OCI-LY7 (cell line): ENCODE measurements at regions of chr5 and their contacts with region 1.

Region 1: DNA sequence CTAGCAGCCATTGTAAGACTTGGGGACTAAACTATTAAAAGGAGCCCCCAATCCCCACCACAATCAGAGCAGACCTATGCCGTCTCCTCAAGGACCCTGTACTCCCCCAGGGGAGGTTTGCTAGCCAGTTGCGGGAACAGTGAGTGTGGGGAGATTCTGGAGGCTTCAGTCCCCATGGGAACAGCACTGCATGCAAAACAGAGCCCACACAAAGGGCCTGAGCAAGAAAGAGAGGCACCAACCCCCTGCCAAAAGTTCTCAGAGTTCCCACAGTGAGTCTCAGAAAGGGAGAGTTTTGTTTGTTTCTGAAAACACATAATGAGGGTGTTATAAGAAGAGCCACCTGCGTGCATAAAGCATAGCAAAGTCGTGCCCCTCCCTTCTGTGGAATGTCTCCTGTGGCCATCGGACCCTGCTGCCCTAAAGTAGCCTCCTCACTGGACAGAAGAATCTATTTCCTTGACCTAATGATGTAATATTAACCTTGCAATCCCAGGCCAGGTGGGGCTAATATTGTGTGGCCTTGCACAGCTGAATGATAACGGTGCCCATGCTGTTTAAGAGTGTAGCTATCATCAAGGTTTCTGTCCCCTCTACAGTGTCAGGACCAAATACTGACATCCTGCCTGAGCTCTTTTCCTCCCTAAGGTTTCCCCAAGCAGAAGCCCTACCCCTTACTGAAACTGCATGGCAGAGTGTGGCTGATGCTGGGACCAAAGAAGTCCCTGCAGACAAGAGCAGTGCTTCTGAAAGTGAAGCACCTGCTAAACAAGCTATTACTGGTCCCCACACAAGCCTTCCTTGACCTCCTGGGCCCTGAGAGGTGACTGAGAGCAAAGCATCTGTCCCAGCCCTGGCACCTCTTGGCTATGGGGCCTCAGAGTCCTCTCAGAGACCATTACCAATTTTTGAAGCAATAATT is 56.4 kb downstream of the CFAP90 start:
- DNase-seq: peak; percentile 16
- H3K4me3 ChIP-seq: no peak overlapping the region
- H3K27ac ChIP-seq: no peak overlapping the region
- H3K4me1 ChIP-seq: peaks cover 10% of the 10 kb centered on the region
- CTCF ChIP-seq: no peak

Region 2: GRCh38 chr5:7436506-7436905 is 358.1 kb before region 1 on chr5:
- CTCF ChIA-PET with region 1: no interaction called
- POLR2A ChIA-PET with region 1: no interaction called
- intact Hi-C with region 1: no loop called
- DNase-seq: no peak
- H3K4me3 ChIP-seq: no peak overlapping the region
- H3K27ac ChIP-seq: no peak overlapping the region
- H3K4me1 ChIP-seq: no peaks in the 10 kb centered on the region
- CTCF ChIP-seq: no peak

Region 3: GRCh38 chr5:7683753-7684152 is 110.8 kb before region 1 on chr5:
- CTCF ChIA-PET with region 1: no interaction called
- POLR2A ChIA-PET with region 1: no interaction called
- intact Hi-C with region 1: no loop called
- DNase-seq: no peak
- H3K4me3 ChIP-seq: no peak overlapping the region
- H3K27ac ChIP-seq: no peak overlapping the region
- H3K4me1 ChIP-seq: no peaks in the 10 kb centered on the region
- CTCF ChIP-seq: no peak

Region 4: DNA sequence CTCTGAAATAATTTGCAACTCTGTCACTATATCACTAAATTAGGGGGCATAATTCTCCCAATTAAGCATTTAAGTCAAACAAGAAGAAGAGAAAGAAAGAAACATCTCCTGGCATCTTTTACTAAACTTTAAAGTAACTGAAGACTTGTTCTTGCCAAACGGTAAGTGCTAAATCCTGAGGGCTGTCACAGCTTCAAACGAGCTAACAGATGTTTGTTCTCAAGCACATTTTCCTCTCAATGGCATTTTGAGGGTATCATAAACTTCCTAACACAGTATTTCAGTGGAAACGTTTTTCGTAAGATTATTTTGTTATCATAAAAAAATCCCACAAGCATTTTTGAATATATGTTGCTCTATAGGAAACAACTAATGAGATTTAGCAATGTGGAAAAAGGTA is 2005.0 kb after region 1 on chr5:
- CTCF ChIA-PET with region 1: no interaction called
- POLR2A ChIA-PET with region 1: no interaction called
- intact Hi-C with region 1: loop called (anchors 5 kb)
- DNase-seq: no peak
- H3K4me3 ChIP-seq: no peak overlapping the region
- H3K27ac ChIP-seq: no peak overlapping the region
- H3K4me1 ChIP-seq: no peaks in the 10 kb centered on the region
- CTCF ChIP-seq: no peak